ENCODE measurements at regions of chr4 and their contacts with region 1.

Region 1: DNA sequence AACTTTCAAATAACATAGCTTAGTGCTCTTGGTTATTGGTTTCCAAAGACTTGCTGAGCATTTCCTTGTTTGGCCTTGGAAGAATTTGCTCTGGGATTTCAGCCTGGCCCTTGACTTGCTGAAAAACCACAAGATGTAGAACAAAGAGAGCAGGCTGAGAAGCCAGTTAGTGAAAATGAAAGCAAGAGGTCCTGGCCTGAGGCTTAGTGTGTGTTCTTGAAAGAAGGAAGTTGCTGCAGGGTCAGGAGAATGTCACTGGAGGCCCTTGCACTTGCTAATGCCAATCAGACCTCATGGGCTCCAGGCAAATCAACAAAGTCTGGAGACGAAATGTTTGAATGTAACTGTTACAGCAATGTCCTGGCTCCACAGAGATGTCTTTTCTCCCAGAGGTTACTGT is 79.4 kb downstream of the SYNPO2 start:
- DNase-seq: peak; percentile 87 to 91
- ATAC-seq: peak; percentile 82 to 83
- H3K4me3 ChIP-seq: peak overlapping the region in 3 of 4 donors; percentile 24 to 36 (median 33)
- H3K27ac ChIP-seq: peak overlapping the region; percentile 87 to 99 (median 92)
- H3K4me1 ChIP-seq: peaks cover 55 to 63% of the 10 kb centered on the region in 2 donors
- H3K27me3 ChIP-seq: no peaks in the 10 kb centered on the region
- CTCF ChIP-seq: no peak
- POLR2A ChIP-seq: no peak

Region 2: DNA sequence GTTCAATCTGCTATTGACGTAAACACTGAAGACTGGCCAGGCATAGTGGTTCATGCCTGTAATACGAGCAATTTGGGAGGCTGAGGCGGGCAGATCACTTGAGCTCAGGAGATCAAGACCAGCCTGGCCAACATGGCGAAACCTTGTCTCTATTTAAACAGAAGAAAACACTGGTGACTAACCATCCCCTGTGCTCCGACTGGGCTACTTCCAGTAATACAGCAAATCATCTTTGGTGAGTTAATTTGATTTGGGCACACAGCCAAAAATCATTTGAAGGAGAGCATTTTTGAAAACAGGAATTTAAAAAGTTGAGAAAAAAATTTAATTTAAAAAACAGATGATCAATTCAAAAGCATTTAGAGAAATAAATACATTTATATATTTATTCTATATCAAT is 184.1 kb before region 1 on chr4:
- in situ Hi-C with region 1: no loop called
- intact Hi-C with region 1: no loop called
- DNase-seq: no peak
- ATAC-seq: no peak
- H3K4me3 ChIP-seq: no peak overlapping the region
- H3K27ac ChIP-seq: no peak overlapping the region
- H3K4me1 ChIP-seq: no peaks in the 10 kb centered on the region
- H3K27me3 ChIP-seq: no peaks in the 10 kb centered on the region
- CTCF ChIP-seq: no peak
- POLR2A ChIP-seq: no peak

Region 3: DNA sequence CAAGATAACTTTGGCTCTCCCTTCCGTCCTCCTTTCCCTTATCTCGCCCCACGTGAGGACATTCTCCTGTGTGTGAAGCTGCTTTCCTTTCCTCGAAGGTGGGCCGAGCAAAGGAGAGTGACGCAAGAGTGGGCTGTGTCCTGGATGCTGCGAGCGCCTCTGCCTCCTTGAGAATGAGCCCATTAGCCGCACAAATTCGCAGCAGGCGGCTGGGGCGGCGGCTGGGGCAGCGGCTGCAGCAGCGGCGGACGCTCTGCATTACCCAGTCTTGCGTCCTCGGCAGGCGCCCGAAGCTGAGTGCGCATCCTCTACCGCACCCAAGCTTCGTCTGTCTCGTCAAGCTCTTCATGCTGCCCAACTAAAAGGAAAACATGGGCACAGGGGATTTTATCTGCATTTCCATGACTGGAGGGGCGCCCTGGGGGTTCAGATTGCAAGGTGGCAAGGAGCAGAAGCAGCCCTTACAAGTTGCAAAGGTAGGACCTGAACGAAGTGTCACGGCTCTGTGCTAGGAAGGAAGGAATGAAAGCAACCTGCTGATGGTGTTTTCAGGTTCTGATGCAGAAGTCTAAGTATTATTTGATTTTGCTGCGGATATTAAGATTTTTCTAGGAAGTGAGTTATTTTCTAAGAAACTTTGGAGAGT is 79.2 kb before region 1 on chr4 and contains the start of gene SYNPO2:
- in situ Hi-C with region 1: no loop called
- intact Hi-C with region 1: loop called (anchors 1 kb)
- DNase-seq: peak; percentile 48 to 73
- ATAC-seq: peak; percentile 67 to 69
- H3K4me3 ChIP-seq: peak within 1 kb of the TSS; percentile 51 to 78 (median 66)
- H3K27ac ChIP-seq: peak within 1 kb of the TSS; percentile 72 to 88 (median 85)
- H3K4me1 ChIP-seq: peaks cover 28 to 36% of the 10 kb centered on the region in 2 donors
- H3K27me3 ChIP-seq: no peaks in the 10 kb centered on the region
- CTCF ChIP-seq: no peak
- POLR2A ChIP-seq: peak; percentile 10 to 54
- total RNA-seq, gene SYNPO2: 998 to 4,186 (median 1,764) TPM

Region 4: GRCh38 chr4:119068529-119068962 is 100.5 kb after region 1 on chr4:
- in situ Hi-C with region 1: no loop called
- intact Hi-C with region 1: no loop called
- DNase-seq: no peak
- ATAC-seq: no peak
- H3K4me3 ChIP-seq: no peak overlapping the region
- H3K27ac ChIP-seq: no peak overlapping the region
- H3K4me1 ChIP-seq: no peaks in the 10 kb centered on the region
- H3K27me3 ChIP-seq: no peaks in the 10 kb centered on the region
- CTCF ChIP-seq: no peak
- POLR2A ChIP-seq: no peak

Region 5: DNA sequence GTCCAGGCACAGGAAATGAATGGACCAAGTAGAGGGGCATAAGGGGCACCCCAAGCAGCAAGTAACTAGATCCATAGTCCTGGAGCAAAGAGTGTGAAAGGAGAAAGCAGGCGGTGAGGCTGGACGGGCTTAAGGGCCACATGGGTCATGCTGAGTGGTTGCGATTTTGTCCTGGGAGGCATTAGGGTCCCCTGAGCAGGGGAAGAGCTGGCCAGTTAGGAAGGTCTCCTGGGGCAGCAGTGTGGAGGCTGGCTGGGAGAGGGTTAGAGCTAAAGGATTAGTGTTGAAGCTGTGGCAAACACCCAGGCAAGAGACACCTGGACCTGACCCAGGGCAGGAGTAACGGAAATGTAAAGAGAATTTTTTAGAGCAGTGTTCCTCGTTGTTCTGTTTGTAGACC is 194.2 kb after region 1 on chr4:
- in situ Hi-C with region 1: no loop called
- intact Hi-C with region 1: no loop called
- DNase-seq: no peak
- ATAC-seq: no peak
- H3K4me3 ChIP-seq: no peak overlapping the region
- H3K27ac ChIP-seq: peak overlapping the region in 2 of 4 donors; percentile 9 to 35
- H3K4me1 ChIP-seq: no peaks in the 10 kb centered on the region
- H3K27me3 ChIP-seq: no peaks in the 10 kb centered on the region
- CTCF ChIP-seq: no peak
- POLR2A ChIP-seq: no peak